SK-N-SH (cell line): ENCODE measurements at regions of chr5 and their contacts with region 1.

Region 1: GRCh38 chr5:43484106-43484849 is 613 bp upstream of the TMEM267 start:
- DNase-seq: peak; percentile 83
- H3K4me3 ChIP-seq: peak overlapping the region; percentile 76 to 85
- H3K27ac ChIP-seq: peak overlapping the region; percentile 92 to 97
- H3K4me1 ChIP-seq: peaks cover 0 to 7% of the 10 kb centered on the region in 2 experiments; a peak in 2 of 4 replicates
- H3K27me3 ChIP-seq: no peaks in the 10 kb centered on the region
- CTCF ChIP-seq: peak; percentile 74
- EP300 ChIP-seq: no peak
- RAD21 ChIP-seq: peak; percentile 59

Region 2: DNA sequence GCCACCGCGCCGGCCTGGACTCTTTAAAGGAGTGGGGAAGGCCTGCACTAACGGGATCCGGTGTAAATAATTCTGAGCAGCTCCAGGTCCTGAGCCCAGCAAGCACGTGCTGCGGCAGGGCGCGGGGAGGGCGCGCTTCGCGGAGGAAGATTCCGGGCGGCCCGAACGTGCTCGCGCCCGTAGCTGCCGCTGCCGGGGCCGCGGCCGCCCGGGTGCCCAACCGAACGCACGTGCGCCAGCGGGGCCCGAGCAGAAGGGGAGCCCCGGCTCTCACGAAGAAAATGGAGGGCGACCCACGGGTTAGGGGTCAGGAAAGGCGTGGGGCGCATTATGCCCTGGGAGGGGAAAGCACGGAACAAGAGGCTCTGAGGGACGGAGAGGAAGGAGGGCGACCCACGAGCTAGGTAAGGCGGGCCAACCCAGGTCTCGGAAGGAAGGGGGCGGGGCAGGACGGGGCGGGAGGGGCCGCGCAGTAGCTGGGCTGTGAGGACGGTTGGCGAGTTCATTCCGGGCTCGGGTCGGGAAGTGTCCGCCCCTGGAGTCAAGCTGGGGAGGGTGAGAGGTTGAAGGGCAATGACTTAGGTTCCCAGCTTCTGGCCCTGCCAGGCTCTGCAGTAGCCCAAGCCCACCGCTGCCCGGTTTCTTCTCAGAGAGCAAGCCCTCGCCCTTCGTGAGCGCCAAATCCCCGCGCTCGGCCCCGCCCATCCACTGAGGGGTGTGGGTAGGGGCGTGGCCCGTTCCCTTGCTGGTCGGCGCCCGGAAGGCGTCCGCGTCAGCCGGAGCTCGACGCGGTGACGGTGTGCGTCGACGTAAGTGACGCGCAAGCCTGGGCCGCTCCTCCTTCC is 363.3 kb before region 1 on chr5 and contains the start of gene ZNF131:
- CTCF ChIA-PET with region 1: interaction called, 5 read pairs
- POLR2A ChIA-PET with region 1: interaction called, 11 read pairs
- DNase-seq: peak; percentile 95
- H3K4me3 ChIP-seq: peak within 1 kb of the TSS; percentile 87 to 99
- H3K27ac ChIP-seq: peak within 1 kb of the TSS; percentile 92 to 96
- H3K4me1 ChIP-seq: peaks cover 15 to 16% of the 10 kb centered on the region in 2 experiments; a peak in 3 of 4 replicates
- H3K27me3 ChIP-seq: no peaks in the 10 kb centered on the region
- CTCF ChIP-seq: no peak
- EP300 ChIP-seq: no peak
- RAD21 ChIP-seq: no peak
- polyA plus RNA-seq, gene ZNF131: 17.2 and 22.9 TPM in 2 replicates

Region 3: DNA sequence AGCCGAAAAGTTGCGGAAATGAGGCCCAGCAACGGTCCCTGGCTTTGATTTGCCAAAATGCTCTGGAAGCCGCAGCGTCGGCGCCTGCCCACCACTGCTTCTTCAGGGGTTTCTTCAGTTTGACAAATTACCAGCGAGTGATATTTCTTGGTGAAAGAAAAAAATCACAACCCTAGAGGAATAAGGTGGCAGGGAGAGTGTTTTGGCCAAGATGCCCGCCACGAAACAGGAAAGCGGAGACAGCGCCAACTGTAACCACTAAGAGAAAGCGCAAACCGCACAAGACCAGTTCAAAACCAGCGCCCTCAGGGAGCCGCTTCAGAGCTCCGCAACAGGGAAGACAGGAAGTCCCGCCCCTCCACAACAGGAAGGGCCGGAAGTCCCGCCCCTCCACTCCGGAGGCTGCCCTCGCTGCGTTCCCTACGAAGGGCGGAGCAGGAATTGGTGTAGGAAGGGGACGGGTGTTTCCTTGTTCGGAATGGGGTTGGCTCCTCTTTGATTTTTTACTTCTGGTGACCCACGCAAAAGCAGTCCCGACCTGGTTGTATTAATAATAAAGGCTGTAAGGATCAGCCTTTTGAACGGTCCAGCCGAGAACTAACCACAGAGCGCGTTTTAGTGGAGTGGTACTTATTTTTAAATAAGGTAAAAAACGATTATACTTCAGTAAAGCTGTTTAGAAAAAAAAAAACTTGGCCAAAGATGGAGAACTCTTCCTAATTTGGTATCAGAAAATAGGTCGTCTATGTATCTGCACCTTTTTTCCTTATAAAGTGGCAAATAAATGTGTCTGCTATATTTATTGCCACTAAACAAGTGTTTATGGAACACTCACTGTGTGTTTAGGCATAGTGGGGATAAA is 30.8 kb after region 1 on chr5 and contains the start of gene C5orf34:
- CTCF ChIA-PET with region 1: interaction called, 13 read pairs
- POLR2A ChIA-PET with region 1: interaction called, 28 read pairs
- DNase-seq: peak; percentile 96
- H3K4me3 ChIP-seq: peak within 1 kb of the TSS; percentile 76 to 96
- H3K27ac ChIP-seq: peak within 1 kb of the TSS; percentile 91 to 96
- H3K4me1 ChIP-seq: peaks cover 0 to 11% of the 10 kb centered on the region in 2 experiments; a peak in 2 of 4 replicates
- H3K27me3 ChIP-seq: no peaks in the 10 kb centered on the region
- CTCF ChIP-seq: peak; percentile 20
- EP300 ChIP-seq: no peak
- RAD21 ChIP-seq: no peak
- polyA plus RNA-seq, gene C5orf34: 2.9 and 3.5 TPM in 2 replicates

Region 4: DNA sequence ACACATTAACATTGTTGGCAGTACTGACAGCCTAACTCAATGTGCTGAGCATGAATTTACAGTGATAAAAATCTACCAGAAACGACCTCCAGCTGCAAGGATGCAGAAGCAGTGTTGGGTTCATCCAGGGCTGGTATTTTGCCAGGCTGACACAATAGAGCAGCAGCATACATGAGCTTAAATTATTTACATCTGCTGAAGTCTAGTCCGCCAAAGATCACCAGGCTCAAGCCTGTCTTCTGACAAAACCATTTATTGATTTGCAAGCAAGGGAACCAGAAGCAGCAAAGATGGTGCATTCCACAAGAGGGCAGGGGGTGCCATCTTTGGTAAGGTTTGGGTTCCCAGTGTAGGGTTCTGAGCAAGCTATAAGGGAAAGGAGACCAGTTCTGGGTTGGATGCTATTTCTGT is 39.4 kb after region 1 on chr5:
- CTCF ChIA-PET with region 1: interaction called, 22 read pairs
- POLR2A ChIA-PET with region 1: interaction called, 15 read pairs
- DNase-seq: peak; percentile 74
- H3K4me3 ChIP-seq: no peak overlapping the region
- H3K27ac ChIP-seq: peak overlapping the region; percentile 25 to 99; a peak in 3 of 4 replicates
- H3K4me1 ChIP-seq: peaks cover 0 to 17% of the 10 kb centered on the region in 2 experiments; a peak in 2 of 4 replicates
- H3K27me3 ChIP-seq: no peaks in the 10 kb centered on the region
- CTCF ChIP-seq: no peak
- EP300 ChIP-seq: peak in 1 of 2 experiments; percentile 83; a peak in 2 of 4 replicates
- RAD21 ChIP-seq: peak; percentile 26

Region 5: GRCh38 chr5:43543434-43543833 is 59.2 kb after region 1 on chr5:
- CTCF ChIA-PET with region 1: interaction called, 10 read pairs
- POLR2A ChIA-PET with region 1: no interaction called
- DNase-seq: no peak
- H3K4me3 ChIP-seq: no peak overlapping the region
- H3K27ac ChIP-seq: no peak overlapping the region
- H3K4me1 ChIP-seq: no peaks in the 10 kb centered on the region
- H3K27me3 ChIP-seq: no peaks in the 10 kb centered on the region
- CTCF ChIP-seq: no peak
- EP300 ChIP-seq: no peak
- RAD21 ChIP-seq: no peak

Region 6: DNA sequence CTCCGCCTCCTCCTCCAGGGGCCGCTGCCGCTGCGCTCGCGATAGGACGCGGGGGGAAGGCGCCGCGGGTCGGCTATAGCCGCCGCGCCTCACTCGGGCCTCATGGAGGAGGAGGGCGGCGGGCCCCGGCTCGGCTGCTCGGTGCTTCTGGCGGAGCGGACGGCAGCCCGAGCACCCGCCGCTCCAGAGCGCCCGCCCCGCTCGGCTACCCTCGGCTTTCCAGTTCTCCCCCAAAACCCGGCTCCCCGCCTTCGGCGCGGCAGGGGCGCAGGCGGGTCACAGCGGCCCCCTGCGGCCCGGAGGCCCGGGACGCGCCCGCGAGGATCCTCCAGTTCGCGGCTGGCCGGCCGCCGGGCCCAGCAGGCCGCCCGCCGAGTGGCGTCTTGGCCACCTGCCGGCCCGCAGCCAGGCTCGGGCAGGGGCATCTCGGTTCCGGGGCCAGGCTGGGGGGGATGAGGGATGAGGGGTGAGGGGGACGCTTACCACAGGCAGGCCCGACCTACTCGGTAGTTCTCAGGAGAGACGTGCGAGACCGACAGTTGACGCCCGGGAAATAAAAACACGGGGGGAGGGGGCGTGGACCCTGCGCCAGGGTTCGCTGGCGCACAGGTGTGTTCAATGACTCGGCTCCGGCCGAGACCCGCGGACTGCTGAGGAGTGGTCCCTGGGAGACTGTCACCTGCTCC is 72.7 kb after region 1 on chr5 and contains the start of gene PAIP1:
- CTCF ChIA-PET with region 1: interaction called, 10 read pairs
- POLR2A ChIA-PET with region 1: interaction called, 12 read pairs
- DNase-seq: peak; percentile 94
- H3K4me3 ChIP-seq: peak within 1 kb of the TSS; percentile 90 to 92
- H3K27ac ChIP-seq: peak within 1 kb of the TSS; percentile 86 to 95
- H3K4me1 ChIP-seq: peaks cover 19 to 28% of the 10 kb centered on the region in 2 experiments; a peak in 3 of 4 replicates
- H3K27me3 ChIP-seq: no peaks in the 10 kb centered on the region
- CTCF ChIP-seq: peak; percentile 62
- EP300 ChIP-seq: peak in 1 of 2 experiments; percentile 10; a peak in 1 of 4 replicates
- RAD21 ChIP-seq: no peak
- polyA plus RNA-seq, gene PAIP1: 70.0 and 98.5 TPM in 2 replicates

Region 7: DNA sequence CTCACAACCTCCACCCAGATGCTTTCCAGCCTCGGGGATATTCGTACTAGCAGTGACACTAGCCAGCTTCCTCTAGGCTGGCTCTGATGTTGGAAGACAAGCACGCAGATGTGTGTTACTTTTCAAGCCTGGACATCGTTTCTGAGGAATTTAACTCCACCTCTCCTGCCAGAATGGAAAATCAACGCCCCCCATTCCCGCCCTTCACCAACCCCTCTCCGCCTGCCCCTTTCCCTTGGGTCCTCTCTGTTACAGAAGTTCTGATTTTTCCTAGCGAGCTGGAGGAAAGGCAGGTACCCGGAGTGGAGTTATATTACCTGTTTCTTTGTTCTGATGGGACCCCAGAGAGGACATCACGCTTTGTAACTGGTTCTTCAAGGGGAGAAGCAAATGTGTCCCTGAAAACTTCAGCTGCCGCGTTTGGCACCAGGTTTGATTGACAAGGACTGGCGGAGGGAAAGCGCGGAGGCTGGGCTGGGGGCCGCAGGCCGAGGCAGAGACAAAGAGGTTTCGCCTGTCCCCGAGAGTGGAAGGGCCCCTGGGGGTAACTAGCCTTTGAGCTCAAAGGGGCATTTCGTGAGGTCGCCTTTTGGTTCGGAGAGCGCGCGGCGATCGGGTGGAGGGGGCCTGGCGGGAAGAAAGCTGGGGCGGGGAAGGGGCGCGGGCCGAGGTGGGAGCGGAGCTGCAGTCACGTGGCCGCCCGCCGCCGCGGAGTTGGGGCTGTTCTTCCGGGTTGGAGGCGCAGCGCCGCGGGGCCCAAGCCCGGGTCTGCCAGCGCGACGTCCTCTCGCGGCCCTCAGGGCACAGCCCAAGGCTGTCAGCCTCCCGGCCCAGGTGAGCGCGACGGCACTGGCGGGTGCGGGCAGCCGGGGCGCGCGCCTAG is 118.4 kb after region 1 on chr5 and contains the start of gene NNT:
- CTCF ChIA-PET with region 1: interaction called, 4 read pairs
- POLR2A ChIA-PET with region 1: interaction called, 30 read pairs
- DNase-seq: peak; percentile 84
- H3K4me3 ChIP-seq: peak within 1 kb of the TSS; percentile 82 to 87
- H3K27ac ChIP-seq: peak within 1 kb of the TSS; percentile 71 to 95
- H3K4me1 ChIP-seq: peaks cover 5 to 15% of the 10 kb centered on the region in 2 experiments; a peak in 2 of 4 replicates
- H3K27me3 ChIP-seq: no peaks in the 10 kb centered on the region
- CTCF ChIP-seq: no peak
- EP300 ChIP-seq: peak in 1 of 2 experiments; percentile 54; a peak in 1 of 4 replicates
- RAD21 ChIP-seq: no peak; the same call in 1 of the 2 replicates
- polyA plus RNA-seq, gene NNT: 21.9 and 29.0 TPM in 2 replicates